Heart left ventricle (tissue), 16 donors: ENCODE measurements at regions of chr3 and their contacts with region 1.

Region 1: GRCh38 chr3:126342991-126343648 is 14.1 kb downstream of the KLF15 start:
- DNase-seq: peak in 3 of 5 donors; percentile 8 to 34 (median 13)
- ATAC-seq: no peak
- H3K4me3 ChIP-seq: no peak overlapping the region
- H3K27ac ChIP-seq: peak overlapping the region in 1 of 12 donors; percentile 41
- H3K4me1 ChIP-seq: peaks cover 0 to 65% (median 18%) of the 10 kb centered on the region in 12 donors
- H3K27me3 ChIP-seq: no peaks in the 10 kb centered on the region
- CTCF ChIP-seq: no peak
- POLR2A ChIP-seq: no peak

Region 2: DNA sequence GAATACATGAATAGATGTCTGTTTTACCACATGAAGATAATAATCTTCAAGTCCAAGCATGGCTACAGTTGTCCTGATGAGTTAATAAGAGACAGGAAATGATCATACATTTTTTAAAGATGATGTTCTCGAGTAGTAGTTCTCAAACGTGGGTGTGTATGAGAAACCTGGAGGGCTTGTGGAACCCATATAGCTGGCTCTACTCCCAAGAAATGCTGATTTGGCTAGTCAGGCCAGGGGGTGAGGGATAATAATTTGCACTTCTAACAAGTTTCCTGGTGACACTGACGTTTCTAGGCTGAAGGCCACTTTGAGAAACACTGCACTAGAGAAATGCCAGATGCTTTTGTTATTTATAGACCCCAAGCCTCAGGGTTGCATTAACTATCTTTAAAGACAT is 337.2 kb before region 1 on chr3:
- intact Hi-C with region 1: no loop called
- DNase-seq: no peak
- ATAC-seq: peak in 3 of 4 donors; percentile 38 to 71 (median 49)
- H3K4me3 ChIP-seq: no peak overlapping the region
- H3K27ac ChIP-seq: peak overlapping the region in 4 of 12 donors; percentile 6 to 55 (median 30)
- H3K4me1 ChIP-seq: peaks cover 0 to 14% (median 0%) of the 10 kb centered on the region in 12 donors
- H3K27me3 ChIP-seq: no peaks in the 10 kb centered on the region
- CTCF ChIP-seq: no peak
- POLR2A ChIP-seq: no peak

Region 3: GRCh38 chr3:126146525-126147146 is 196.5 kb before region 1 on chr3:
- intact Hi-C with region 1: no loop called
- DNase-seq: peak in 3 of 5 donors; percentile 4 to 23 (median 11)
- ATAC-seq: no peak
- H3K4me3 ChIP-seq: no peak overlapping the region
- H3K27ac ChIP-seq: no peak overlapping the region
- H3K4me1 ChIP-seq: no peaks in the 10 kb centered on the region
- H3K27me3 ChIP-seq: no peaks in the 10 kb centered on the region
- CTCF ChIP-seq: no peak
- POLR2A ChIP-seq: no peak

Region 4: DNA sequence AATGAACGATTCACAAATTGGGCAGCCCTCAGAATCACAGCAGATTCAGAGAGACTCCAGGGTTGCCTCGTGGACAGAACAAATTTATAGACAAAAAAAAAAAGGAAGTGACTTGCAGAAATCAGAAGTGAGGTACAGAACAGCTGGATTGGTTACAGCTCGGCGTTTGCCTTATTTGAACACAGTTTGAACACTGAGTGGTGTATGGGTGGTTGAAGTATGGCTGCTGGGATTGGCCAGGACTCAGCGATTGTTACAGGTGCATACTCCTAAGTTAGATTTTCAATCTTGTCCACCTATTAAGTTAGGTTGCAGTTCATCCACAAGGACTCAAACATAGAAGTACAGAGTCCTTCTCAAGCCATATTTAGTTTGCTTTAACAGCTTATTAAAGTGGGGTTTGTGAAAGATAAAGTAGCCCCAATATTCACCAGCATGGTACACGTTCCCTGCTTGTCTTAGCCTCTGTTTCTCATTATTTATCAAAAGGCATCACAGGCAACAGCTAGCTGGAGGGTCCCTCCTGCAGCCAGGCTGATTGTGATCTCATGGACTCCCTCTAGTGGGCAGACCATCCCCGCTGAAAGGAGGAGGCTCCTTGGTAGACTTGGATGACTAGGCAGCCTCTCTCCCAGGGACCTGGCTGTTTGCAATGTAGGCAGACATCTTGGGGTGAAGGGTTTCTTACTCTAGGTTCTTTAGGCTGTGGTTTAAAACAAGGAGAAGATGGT is 145.1 kb before region 1 on chr3:
- intact Hi-C with region 1: no loop called
- DNase-seq: peak; percentile 38 to 76 (median 56)
- ATAC-seq: peak; percentile 73 to 96 (median 86)
- H3K4me3 ChIP-seq: no peak overlapping the region
- H3K27ac ChIP-seq: peak overlapping the region in 2 of 12 donors; percentile 4 to 25
- H3K4me1 ChIP-seq: no peaks in the 10 kb centered on the region
- H3K27me3 ChIP-seq: no peaks in the 10 kb centered on the region
- CTCF ChIP-seq: peak; percentile 52 to 76 (median 65)
- POLR2A ChIP-seq: no peak

Region 5: DNA sequence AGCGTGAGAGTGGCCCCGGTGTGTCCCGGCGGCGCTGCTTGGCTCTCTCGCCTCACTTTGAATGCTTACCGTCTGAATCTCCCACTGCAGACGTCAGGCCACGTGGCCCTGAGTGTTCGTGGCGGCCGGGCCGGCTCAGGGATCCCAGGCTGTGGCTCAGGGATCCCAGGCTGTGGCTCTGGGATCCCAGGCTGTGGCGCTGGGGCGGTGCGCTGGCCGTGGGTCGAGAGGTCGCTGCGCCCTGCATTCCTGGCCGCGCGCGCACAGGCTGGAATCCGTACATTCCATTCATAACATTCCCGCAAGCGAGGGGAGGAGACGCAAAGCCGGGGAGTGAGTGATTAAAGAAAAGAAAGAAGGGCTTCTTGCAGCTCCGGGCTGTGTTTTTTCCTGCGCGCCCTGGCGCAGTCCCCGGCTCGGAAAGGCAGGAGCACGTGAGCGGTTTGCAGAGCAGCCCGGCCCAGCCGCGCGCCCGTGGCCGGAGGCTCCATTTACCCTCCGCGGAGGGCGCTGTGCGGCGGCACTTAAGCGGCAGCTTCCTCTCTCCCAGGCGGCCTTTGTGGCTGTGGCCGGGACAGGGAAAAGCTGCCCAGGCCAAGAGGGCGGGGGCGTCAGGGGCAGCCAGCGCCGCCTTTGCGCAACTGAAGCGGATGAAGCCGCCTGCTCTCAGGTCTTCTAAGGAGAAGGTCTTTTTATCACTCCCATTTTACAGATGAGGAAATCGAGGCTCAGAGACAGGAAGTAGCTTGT is 75.7 kb before region 1 on chr3:
- intact Hi-C with region 1: loop called in 1 of 10 experiments (anchors 5 kb)
- DNase-seq: peak; percentile 59 to 85 (median 79)
- ATAC-seq: peak; percentile 55 to 74 (median 70)
- H3K4me3 ChIP-seq: peak overlapping the region in 11 of 12 donors; percentile 0 to 47 (median 43)
- H3K27ac ChIP-seq: peak overlapping the region; percentile 52 to 93 (median 89)
- H3K4me1 ChIP-seq: peaks cover 0 to 54% (median 23%) of the 10 kb centered on the region in 12 donors
- H3K27me3 ChIP-seq: peaks cover 0 to 23% (median 0%) of the 10 kb centered on the region in 9 donors
- CTCF ChIP-seq: peak in 4 of 12 donors; percentile 22 to 44 (median 34)
- POLR2A ChIP-seq: peak in 1 of 2 donors; percentile 55

Region 6: DNA sequence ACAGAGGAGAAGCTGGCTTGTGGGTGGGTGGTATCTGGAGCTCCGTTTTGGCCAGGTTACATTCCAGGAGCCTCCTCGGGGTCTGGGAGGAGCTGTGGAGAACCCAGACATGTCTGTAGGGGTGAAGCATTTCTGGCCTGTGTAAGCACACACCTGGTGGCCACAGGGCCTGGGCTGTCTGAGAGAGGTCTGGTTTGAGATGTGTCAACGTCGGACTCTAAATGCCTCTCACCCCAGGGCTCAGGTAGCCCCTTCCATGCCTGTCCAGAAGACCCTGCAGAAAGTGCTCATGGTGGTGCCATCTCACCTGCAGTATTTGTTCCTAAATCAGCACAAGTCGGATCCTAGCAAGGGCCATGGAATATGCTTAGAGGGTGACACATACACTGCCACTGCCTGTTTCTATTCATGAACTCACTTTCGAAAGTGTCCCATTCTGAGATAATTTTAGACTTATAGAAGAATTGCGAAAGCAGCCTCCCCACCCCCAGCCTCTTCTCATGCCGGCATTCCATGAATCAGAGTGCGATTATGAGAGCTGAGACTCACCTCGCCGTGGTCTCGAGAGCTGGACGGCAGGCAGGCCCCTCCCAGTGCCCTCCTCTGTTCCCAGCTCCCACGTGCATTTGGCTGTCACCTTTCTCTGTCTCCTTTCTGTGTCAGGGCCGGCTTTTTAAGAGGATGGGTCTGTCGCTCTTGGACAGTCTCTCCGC is 49.6 kb before region 1 on chr3:
- intact Hi-C with region 1: loop called in 1 of 10 experiments (anchors 5 kb)
- DNase-seq: peak in 3 of 5 donors; percentile 65 to 74 (median 70)
- ATAC-seq: peak; percentile 39 to 92 (median 86)
- H3K4me3 ChIP-seq: no peak overlapping the region
- H3K27ac ChIP-seq: peak overlapping the region in 11 of 12 donors; percentile 35 to 77 (median 60)
- H3K4me1 ChIP-seq: peaks cover 0 to 5% (median 0%) of the 10 kb centered on the region in 12 donors
- H3K27me3 ChIP-seq: peaks cover 0 to 8% (median 0%) of the 10 kb centered on the region in 9 donors
- CTCF ChIP-seq: no peak
- POLR2A ChIP-seq: no peak

Region 7: DNA sequence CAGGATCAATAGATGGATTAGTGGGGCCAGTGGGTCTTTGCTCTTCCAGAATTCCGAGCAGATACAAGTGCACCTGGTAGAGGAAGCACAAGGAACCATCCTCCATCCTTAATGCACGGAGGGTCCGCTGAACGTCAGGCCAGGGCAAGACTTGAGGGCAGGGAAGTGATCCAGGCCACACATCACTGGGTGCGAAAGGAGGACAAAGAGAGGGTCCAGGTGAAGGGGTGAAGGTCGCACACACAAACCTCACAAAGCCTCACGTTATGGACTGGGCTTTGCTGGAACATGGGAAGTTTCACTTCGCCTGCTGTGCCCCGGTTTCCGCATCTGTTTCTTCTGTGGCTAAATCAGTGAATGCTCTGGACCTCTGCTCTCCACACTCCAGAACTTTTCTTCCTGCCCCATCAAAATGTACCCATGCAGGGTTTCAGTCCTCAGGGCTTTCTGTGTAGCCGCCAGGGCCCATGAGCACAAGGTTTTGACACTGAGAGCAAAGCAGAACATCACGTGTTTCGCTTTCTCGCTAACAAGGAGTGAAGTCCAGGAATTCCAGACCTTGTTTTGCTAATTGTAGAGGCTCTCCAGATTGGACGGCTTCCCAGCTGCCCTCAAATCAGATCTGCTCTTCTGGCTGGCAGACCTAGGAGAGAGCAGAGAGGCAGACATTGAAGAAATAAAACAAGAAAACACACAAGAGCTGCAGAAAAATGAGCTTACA is 42.2 kb before region 1 on chr3:
- intact Hi-C with region 1: loop called in 1 of 10 experiments (anchors 5 kb)
- DNase-seq: peak in 4 of 5 donors; percentile 59 to 82 (median 64)
- ATAC-seq: peak; percentile 90 to 97 (median 92)
- H3K4me3 ChIP-seq: no peak overlapping the region
- H3K27ac ChIP-seq: peak overlapping the region; percentile 55 to 79 (median 70)
- H3K4me1 ChIP-seq: peaks cover 0 to 13% (median 0%) of the 10 kb centered on the region in 12 donors
- H3K27me3 ChIP-seq: no peaks in the 10 kb centered on the region
- CTCF ChIP-seq: no peak
- POLR2A ChIP-seq: no peak

Region 8: GRCh38 chr3:126322181-126322967 is 20.7 kb before region 1 on chr3:
- intact Hi-C with region 1: loop called in 1 of 10 experiments (anchors 2 kb)
- DNase-seq: peak in 1 of 5 donors; percentile 6
- ATAC-seq: no peak
- H3K4me3 ChIP-seq: no peak overlapping the region
- H3K27ac ChIP-seq: no peak overlapping the region
- H3K4me1 ChIP-seq: no peaks in the 10 kb centered on the region
- H3K27me3 ChIP-seq: no peaks in the 10 kb centered on the region
- CTCF ChIP-seq: no peak
- POLR2A ChIP-seq: no peak

Region 9: GRCh38 chr3:126394575-126395228 is 51.6 kb after region 1 on chr3 and contains the start of gene CFAP100:
- intact Hi-C with region 1: no loop called
- DNase-seq: peak in 3 of 5 donors; percentile 34 to 56 (median 48)
- ATAC-seq: peak; percentile 16 to 78 (median 62)
- H3K4me3 ChIP-seq: peak within 1 kb of the TSS in 11 of 12 donors; percentile 13 to 50 (median 30)
- H3K27ac ChIP-seq: no peak within 1 kb of the TSS
- H3K4me1 ChIP-seq: peaks cover 0 to 9% (median 2%) of the 10 kb centered on the region in 12 donors
- H3K27me3 ChIP-seq: peaks cover 0 to 26% (median 0%) of the 10 kb centered on the region in 9 donors
- CTCF ChIP-seq: no peak
- POLR2A ChIP-seq: no peak
- total RNA-seq, gene CFAP100: not detected